ENCODE measurements at regions of chr22 and their contacts with region 1.

Region 1: DNA sequence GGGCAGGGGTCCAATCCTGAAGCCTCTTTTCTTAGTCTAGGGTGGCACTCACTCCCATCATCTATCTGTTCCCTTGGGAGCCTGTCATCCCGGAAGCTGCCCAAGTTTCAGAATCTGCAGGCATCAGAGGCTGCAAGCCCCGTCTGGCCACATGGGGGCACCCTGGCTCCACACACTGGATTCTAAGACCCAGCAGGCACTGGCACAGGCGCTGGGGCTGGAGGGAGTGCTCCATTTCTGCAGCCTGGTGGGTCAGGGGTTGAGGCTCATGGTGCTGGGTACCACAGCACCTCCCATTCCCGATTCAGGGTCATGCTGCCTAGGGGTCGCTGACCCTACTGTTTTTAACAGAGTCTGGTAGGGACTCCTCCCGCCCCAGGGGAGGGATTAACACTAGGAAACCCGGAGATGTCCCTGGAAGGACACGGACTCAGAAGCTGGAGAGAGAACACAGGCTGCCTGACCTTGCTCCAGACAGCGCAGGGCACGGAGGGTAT is 243.9 kb upstream of the SYN3 start:
- DNase-seq: peak; percentile 85 to 94 (median 90)
- H3K4me3 ChIP-seq: peak overlapping the region in 3 of 4 donors; percentile 17 to 53 (median 25)
- H3K27ac ChIP-seq: peak overlapping the region; percentile 17 to 74 (median 58)
- H3K4me1 ChIP-seq: peaks cover 0 to 9% of the 10 kb centered on the region in 2 donors
- H3K27me3 ChIP-seq: no peaks in the 10 kb centered on the region
- CTCF ChIP-seq: peak; percentile 91 to 96 (median 95)
- POLR2A ChIP-seq: no peak

Region 2: DNA sequence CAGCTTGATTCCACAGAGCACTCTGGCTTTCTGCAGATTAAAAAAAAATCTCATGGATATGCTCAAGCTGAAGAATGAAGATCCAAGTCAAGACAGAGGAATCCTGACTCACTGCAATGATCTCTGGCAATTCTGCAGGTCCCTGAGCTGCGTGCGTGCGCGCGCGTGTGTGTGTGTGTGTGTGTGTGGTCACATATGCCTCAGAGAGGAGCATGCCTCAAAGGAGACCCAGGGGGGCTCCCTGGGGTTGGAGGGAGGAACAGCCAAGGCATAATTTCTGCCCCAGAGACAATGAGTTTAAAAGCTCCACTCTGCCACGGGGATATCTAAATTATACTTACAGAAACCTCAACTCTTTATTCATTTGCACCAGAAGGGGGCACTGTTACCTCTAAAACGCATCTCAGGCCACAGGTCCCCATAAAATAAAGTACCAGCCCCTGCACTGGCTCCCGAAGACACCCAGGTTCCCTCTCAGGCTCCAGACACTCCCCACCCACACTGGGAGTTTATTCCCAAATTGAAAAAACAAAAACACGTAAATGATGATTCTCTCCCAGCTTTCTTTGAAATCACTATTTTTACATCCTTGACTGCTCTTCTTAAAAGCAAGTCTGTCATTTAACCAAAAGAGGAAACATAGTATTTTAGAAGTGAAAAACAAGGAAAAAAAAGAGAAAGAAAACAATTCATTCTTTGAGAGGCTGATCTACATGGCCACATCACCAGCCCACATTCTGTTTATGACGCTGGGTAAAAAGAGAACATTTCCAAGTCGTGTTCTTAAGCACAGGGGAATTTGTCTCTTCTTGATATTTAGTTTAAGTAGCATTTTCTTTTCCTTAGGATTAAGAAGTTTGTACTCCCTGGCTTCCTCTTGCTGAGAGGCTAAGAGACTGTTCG is 217.2 kb after region 1 on chr22:
- intact Hi-C with region 1: loop called in 1 of 2 experiments (anchors 10 kb)
- DNase-seq: peak in 6 of 7 donors; percentile 26 to 67 (median 52)
- H3K4me3 ChIP-seq: no peak overlapping the region
- H3K27ac ChIP-seq: no peak overlapping the region
- H3K4me1 ChIP-seq: no peaks in the 10 kb centered on the region
- H3K27me3 ChIP-seq: no peaks in the 10 kb centered on the region
- CTCF ChIP-seq: peak; percentile 54 to 81 (median 70)
- POLR2A ChIP-seq: no peak

Region 3: DNA sequence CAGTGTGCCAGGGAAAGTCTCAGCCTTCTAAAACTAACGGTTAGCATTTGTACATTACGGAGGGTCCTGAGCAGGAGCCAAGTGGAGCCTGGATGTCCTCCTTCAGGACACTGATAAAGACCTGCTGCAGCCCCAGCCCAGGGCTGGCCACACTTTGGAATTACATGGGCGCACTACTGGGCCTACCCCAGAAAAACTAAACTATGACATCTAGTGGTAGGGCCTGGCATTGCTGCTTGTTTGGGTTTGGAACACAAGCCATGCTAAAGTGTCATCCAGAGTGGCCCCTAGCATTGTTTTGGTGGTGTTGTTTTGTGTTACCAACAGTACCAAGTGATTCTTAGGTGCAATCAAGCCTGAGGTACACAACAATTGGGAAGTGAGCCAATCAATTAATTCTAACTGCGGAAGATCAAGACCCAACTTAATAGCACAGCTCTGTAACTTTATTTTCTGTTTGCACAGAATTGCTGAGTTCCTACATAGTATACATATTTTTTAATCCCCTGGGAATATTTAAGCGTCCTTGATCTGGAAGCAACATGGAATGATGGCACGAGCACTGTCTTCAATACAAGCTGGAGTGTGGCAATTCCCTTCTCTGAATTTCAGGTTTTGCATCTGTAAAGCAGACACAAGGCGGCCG is 277.5 kb after region 1 on chr22:
- intact Hi-C with region 1: loop called (anchors 5 to 10 kb)
- DNase-seq: peak; percentile 62 to 82 (median 75)
- H3K4me3 ChIP-seq: no peak overlapping the region
- H3K27ac ChIP-seq: no peak overlapping the region
- H3K4me1 ChIP-seq: peaks cover 7 to 8% of the 10 kb centered on the region in 2 donors
- H3K27me3 ChIP-seq: no peaks in the 10 kb centered on the region
- CTCF ChIP-seq: peak; percentile 83 to 92 (median 86)
- POLR2A ChIP-seq: no peak

Region 4: DNA sequence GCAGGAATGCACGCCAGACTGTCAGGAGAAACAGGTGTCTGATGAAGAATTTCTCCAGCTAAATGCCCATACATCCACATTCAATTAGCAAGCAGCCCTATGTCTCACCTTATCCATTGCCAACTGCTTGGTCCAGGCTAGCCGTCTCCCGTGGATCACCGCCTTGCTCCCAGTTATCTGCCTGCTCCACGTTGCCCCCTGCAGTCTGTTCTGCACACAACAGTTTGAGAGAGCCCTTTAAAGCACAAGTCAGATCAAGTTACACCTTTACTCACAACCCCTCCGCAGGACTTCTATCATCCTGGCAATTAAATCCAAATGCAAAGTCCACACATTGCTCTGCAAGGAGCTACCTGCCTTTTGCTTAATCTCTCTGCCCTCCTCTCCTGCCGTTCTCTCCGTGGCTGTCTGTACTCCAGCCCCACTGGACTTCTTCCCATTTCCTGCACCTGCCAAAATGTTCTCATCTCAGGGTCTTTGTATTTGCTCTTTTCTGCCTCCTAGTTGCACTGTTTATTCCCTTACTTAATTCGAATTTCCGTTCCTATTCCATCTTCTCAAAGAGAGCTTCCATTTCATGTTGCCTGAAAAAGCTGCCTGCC is 803.5 kb after region 1 on chr22:
- intact Hi-C with region 1: loop called in 1 of 2 experiments (anchors 5 kb)
- DNase-seq: peak; percentile 45 to 82 (median 71)
- H3K4me3 ChIP-seq: no peak overlapping the region
- H3K27ac ChIP-seq: no peak overlapping the region
- H3K4me1 ChIP-seq: no peaks in the 10 kb centered on the region
- H3K27me3 ChIP-seq: peaks cover 10% of the 10 kb centered on the region
- CTCF ChIP-seq: peak; percentile 52 to 72 (median 70)
- POLR2A ChIP-seq: no peak

Measured in adrenal gland (tissue), 19 donors.